ENCODE measurements at regions of chr1 and their contacts with region 1.

Region 1: DNA sequence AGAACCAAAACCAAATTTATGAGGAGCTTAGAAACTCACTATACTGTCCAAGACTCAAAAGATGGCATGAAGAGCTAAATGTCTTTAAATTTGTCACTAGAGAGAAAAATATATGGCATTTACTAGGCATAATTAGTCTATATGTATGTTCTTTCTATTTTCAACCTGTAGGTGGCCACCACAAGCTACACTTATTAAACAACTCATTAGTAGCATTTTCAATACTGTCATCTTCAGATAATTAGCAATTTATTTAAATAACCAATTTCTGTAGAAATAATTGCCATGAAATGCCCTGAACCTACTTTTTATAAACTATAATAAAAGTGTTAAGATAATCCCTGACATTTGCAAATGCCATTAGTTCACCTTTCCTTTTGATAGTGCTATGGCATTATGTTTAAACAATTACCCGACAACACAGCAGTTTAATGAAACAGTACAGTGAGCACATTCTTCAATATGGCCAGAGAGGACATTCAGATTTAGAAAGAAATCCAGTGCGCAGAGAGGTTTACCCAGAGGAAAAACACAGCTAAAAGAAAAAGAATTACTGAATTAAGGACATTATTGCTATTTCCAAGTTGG is 522.5 kb downstream of the PTBP2 start:
- DNase-seq: peak; percentile 35
- H3K4me3 Mint-ChIP-seq: no peak overlapping the region
- H3K27ac Mint-ChIP-seq: peak overlapping the region; percentile 53
- H3K4me1 Mint-ChIP-seq: peaks cover 5% of the 10 kb centered on the region
- H3K27me3 Mint-ChIP-seq: no peaks in the 10 kb centered on the region
- CTCF ChIP-seq: peak; percentile 51

Region 2: DNA sequence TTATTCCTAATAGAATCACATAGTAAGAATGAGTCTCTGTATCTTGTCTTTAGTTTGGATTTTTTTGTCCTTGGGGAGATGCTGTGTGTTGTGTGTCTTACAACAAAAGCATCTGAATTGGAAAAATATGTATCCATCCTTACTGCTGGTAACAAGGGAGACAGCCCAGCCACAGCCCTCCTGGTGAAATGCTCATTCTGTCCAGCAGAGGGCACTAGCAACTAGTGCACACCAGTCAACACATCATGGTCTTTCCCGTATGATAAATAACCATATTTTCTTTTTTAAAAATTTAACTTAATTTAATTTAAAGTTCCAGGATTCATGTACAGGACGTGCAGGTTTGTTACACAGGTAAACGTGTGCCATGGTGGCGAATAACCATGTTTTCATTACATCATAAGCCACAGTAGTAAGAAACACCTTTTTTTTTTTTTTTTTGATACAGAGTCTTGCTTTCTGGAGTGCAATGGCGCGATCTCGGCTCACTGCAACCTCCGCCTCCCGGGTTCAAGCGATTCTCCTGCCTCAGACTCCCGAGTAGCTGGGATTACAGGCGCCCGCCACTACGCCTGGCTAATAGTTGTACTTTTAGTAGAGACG is 277.4 kb before region 1 on chr1:
- CTCF ChIA-PET with region 1: no interaction called
- POLR2A ChIA-PET with region 1: no interaction called
- intact Hi-C with region 1: loop called (anchors 10 kb)
- DNase-seq: peak; percentile 70
- H3K4me3 Mint-ChIP-seq: peak overlapping the region; percentile 4
- H3K27ac Mint-ChIP-seq: no peak overlapping the region
- H3K4me1 Mint-ChIP-seq: peaks cover 6% of the 10 kb centered on the region
- H3K27me3 Mint-ChIP-seq: no peaks in the 10 kb centered on the region
- CTCF ChIP-seq: peak; percentile 90

Region 3: DNA sequence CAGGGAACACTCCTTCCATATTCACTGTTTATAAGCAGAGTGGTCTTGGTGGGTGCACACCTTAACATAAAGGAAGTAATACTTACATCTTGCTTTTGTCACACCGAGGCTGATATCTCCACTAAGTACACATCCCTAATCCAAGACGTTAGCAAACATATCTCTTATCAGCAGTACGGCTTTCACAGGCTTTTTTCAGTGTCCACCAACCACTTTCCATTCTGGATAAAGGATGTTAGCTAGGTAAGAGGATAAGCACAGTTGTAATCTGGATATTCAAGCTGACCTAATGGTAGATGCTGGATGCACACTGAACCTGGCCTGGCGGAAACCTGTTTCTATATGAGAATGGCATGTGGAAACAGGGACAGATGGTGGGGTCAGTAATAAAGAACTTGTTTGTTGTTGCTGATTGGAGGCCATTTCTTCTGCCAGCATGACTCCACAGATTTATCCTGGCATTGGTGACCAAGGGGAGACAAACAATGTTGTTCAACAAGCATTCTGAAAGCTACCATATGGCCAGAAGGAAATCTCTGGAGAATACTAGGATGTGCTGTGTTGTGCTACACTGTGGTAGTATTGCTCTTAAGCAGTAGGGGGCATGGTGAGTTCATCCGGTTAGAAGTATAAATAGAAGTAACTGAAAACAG is 106.1 kb before region 1 on chr1:
- CTCF ChIA-PET with region 1: interaction called, 10 read pairs
- POLR2A ChIA-PET with region 1: interaction called, 3 read pairs
- intact Hi-C with region 1: loop called (anchors 5 kb)
- DNase-seq: peak; percentile 67
- H3K4me3 Mint-ChIP-seq: no peak overlapping the region
- H3K27ac Mint-ChIP-seq: no peak overlapping the region
- H3K4me1 Mint-ChIP-seq: peaks cover 24% of the 10 kb centered on the region
- H3K27me3 Mint-ChIP-seq: no peaks in the 10 kb centered on the region
- CTCF ChIP-seq: peak; percentile 64

Region 4: DNA sequence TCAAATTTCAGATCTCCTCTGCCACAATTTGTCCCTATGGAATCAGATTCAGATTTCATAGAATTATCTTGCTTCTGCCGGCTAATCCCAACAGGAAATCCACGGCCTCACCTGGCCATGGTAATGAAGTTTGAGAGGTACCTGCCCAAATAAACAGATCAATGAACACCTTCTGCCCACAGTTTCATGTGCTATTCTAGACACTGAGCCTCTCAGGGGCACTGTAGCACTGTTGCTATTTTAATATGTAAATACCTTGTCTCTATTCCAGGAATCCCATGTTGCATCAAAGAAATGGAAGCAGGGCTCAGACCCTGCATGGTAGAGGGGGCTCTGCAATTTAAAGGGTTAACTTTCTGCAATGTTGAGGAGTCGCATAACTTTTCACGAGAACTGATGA is 70.6 kb after region 1 on chr1:
- CTCF ChIA-PET with region 1: no interaction called
- POLR2A ChIA-PET with region 1: no interaction called
- intact Hi-C with region 1: no loop called
- DNase-seq: no peak
- H3K4me3 Mint-ChIP-seq: no peak overlapping the region
- H3K27ac Mint-ChIP-seq: no peak overlapping the region
- H3K4me1 Mint-ChIP-seq: no peaks in the 10 kb centered on the region
- H3K27me3 Mint-ChIP-seq: no peaks in the 10 kb centered on the region
- CTCF ChIP-seq: no peak

Region 5: GRCh38 chr1:97791251-97791650 is 547.2 kb after region 1 on chr1:
- CTCF ChIA-PET with region 1: no interaction called
- POLR2A ChIA-PET with region 1: no interaction called
- intact Hi-C with region 1: no loop called
- DNase-seq: no peak
- H3K4me3 Mint-ChIP-seq: no peak overlapping the region
- H3K27ac Mint-ChIP-seq: no peak overlapping the region
- H3K4me1 Mint-ChIP-seq: peaks cover 3% of the 10 kb centered on the region
- H3K27me3 Mint-ChIP-seq: no peaks in the 10 kb centered on the region
- CTCF ChIP-seq: no peak